Breast epithelium (tissue), 4 donors: ENCODE measurements at regions of chr9 and their contacts with region 1.

Region 1: DNA sequence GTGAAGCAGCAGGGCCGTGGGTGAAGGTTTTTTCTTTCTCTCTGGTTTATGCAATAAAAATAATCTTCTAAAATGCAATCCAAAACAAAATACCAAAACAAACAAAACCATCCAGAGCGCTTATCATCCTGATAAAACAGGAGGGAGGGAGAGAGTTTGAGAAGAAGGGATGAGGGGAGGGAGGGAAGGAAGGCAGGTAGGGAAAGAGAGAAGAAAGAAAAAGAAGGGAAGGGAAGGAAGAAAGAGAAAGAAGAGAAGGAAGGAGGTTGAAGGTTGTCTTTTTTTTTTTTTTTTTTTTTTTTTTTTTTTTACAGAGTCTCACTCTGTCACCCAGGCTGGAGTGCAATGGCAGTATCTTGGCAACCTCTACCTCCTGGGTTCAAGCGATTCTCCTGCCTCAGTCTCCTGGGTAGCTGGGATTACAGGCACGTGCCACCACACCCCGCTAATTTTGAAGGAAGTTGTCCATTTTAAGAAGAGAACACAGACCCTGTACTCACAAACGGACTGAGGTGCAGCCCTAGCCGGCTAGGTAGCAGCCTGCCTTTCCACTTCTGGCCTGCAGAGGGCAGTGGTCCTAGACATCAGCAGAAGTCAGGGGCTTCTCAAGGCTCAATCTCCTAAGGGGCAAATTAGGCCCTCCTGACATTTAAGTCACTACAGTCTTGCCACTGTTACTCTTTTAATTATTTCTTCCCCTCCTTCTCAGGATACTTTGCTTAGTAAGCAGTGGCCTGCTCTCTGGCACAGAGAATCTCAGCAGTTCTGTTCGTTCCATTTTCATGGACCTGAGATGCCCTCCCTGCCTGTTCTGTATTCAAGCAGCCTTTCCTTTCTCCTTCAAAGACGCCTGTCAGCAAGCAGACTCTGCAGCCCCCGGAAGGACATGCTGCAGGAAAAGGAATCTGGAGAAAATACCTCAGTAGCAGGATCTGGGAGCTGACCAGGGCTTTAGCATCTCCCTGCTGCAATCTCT is 76.4 kb downstream of the EPB41L4B start:
- DNase-seq: peak; percentile 58 to 67
- H3K4me3 ChIP-seq: no peak overlapping the region
- H3K27ac ChIP-seq: no peak overlapping the region
- H3K4me1 ChIP-seq: no peaks in the 10 kb centered on the region
- H3K27me3 ChIP-seq: no peaks in the 10 kb centered on the region
- CTCF ChIP-seq: peak; percentile 50 to 87 (median 78)
- POLR2A ChIP-seq: no peak

Region 2: GRCh38 chr9:109320742-109321448 is 76.5 kb after region 1 on chr9 and contains the start of gene EPB41L4B:
- intact Hi-C with region 1: loop called (anchors 5 kb)
- DNase-seq: peak; percentile 88 to 94
- H3K4me3 ChIP-seq: peak within 1 kb of the TSS; percentile 37 to 70 (median 54)
- H3K27ac ChIP-seq: peak within 1 kb of the TSS; percentile 57 to 69
- H3K4me1 ChIP-seq: peaks cover 0 to 3% of the 10 kb centered on the region in 2 donors
- H3K27me3 ChIP-seq: no peaks in the 10 kb centered on the region
- CTCF ChIP-seq: peak; percentile 92 to 96 (median 93)
- POLR2A ChIP-seq: no peak
- total RNA-seq, gene EPB41L4B: 11.5 to 47.2 (median 16.0) TPM